Prostate gland (tissue), 2 donors: ENCODE measurements at regions of chr15 and their contacts with region 1.

Region 1: GRCh38 chr15:81897057-81897677 is 148.7 kb downstream of the MEX3B start:
- DNase-seq: no peak
- H3K4me3 ChIP-seq: no peak overlapping the region
- H3K27ac ChIP-seq: no peak overlapping the region
- H3K4me1 ChIP-seq: peaks cover 5% of the 10 kb centered on the region
- H3K27me3 ChIP-seq: no peaks in the 10 kb centered on the region
- CTCF ChIP-seq: no peak
- POLR2A ChIP-seq: no peak

Region 2: GRCh38 chr15:81312790-81313543 is 584.2 kb before region 1 on chr15:
- intact Hi-C with region 1: no loop called
- DNase-seq: peak; percentile 78
- H3K4me3 ChIP-seq: no peak overlapping the region
- H3K27ac ChIP-seq: peak overlapping the region; percentile 29 to 38
- H3K4me1 ChIP-seq: no peaks in the 10 kb centered on the region
- H3K27me3 ChIP-seq: no peaks in the 10 kb centered on the region
- CTCF ChIP-seq: no peak
- POLR2A ChIP-seq: no peak

Region 3: DNA sequence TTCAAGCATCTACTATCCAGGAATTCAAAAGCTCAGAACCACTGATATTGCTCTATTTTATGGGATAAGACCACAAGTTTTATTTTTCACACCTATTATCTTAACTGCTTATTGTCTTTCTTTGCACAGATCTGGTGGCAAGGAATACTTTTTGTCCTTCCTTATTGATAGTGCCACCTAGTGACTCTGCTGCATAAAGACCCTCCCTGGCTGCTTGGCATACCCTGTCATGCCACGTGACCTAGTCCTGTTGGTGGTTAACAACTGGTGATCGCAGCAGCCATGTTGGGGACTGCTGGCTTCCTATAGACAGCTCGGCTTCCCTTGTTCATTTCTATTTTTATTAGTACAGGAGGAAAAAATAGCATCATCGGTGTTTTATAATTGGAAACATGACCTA is 87.6 kb before region 1 on chr15:
- intact Hi-C with region 1: no loop called
- DNase-seq: no peak
- H3K4me3 ChIP-seq: no peak overlapping the region
- H3K27ac ChIP-seq: no peak overlapping the region
- H3K4me1 ChIP-seq: no peaks in the 10 kb centered on the region
- H3K27me3 ChIP-seq: no peaks in the 10 kb centered on the region
- CTCF ChIP-seq: no peak
- POLR2A ChIP-seq: no peak

Region 4: DNA sequence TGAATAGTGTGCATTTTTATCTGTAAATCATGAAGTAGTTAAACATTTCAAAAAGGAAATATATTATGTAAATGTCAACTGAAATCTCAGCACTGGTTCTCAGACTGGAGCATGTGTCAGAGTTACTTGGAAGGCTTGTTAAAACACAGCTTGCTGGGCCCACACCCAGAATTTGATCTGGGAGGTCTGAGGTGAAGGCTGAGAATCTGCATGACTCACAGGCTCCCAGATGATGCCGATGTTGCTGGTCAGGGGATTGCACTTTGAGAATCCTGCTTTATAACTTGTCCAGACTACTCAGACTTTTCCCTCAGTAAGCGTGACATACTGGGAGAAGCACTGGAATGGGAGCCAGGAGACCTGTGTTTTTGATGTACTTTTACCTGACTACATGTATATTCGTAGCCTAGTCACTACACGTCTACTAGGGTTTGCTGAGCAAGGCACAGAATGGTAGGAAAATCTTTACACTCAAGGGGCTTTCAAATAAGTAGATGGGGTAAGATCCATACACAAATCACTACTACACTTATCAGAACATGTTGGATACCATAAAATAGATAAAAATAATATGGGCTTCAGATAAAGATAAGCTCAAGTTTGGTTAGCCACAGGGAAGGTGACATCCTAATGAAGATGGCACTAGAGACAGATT is 225.7 kb after region 1 on chr15:
- intact Hi-C with region 1: loop called (anchors 10 kb)
- DNase-seq: no peak
- H3K4me3 ChIP-seq: no peak overlapping the region
- H3K27ac ChIP-seq: no peak overlapping the region
- H3K4me1 ChIP-seq: no peaks in the 10 kb centered on the region
- H3K27me3 ChIP-seq: no peaks in the 10 kb centered on the region
- CTCF ChIP-seq: no peak
- POLR2A ChIP-seq: no peak